GM10248 (cell line): ENCODE measurements at regions of chr2 and their contacts with region 1.

Region 1: DNA sequence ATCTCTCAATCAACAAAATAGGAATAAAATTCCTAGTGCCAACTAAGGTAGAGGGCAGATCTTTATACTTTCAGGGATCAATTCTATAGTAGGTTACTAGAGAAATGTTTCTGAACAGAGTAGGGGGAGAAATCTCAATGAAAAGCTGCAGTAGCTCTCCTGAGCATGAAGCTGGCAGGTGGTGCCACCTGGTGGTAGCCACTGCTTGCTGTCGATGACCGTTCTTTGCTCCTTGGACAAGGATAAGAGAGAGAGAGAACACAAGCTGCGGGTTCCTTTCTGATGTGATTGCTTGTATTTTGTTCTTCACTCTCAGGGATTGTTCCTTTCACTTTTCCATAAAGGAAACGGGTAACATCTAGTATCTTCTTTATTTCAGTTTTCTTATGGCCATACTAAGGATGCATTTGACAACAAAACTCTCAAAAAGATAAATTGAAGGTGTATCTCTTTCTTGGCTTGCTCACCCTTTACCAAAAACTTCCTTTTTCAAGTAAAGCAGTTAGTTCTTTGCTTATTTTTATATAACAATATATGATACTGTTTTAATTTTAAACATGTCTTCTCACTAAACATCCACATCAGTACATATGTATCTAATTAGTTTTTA is 18.6 kb upstream of the MRPL19 start:
- DNase-seq: peak; percentile 68
- CTCF ChIP-seq: peak; percentile 95

Region 2: GRCh38 chr2:74690571-74690970 is 937.4 kb before region 1 on chr2:
- CTCF ChIA-PET with region 1: interaction called, 10 read pairs
- POLR2A ChIA-PET with region 1: no interaction called
- DNase-seq: peak; percentile 68
- CTCF ChIP-seq: peak; percentile 75

Region 3: GRCh38 chr2:74919827-74920226 is 708.2 kb before region 1 on chr2:
- CTCF ChIA-PET with region 1: interaction called, 12 read pairs
- POLR2A ChIA-PET with region 1: no interaction called
- DNase-seq: peak; percentile 84
- CTCF ChIP-seq: peak; percentile 91

Region 4: GRCh38 chr2:75246441-75247167 is 381.4 kb before region 1 on chr2:
- CTCF ChIA-PET with region 1: no interaction called
- POLR2A ChIA-PET with region 1: no interaction called
- DNase-seq: no peak
- CTCF ChIP-seq: no peak

Region 5: GRCh38 chr2:75640621-75641121 is 12.7 kb after region 1 on chr2:
- CTCF ChIA-PET with region 1: interaction called, 24 read pairs
- POLR2A ChIA-PET with region 1: no interaction called
- DNase-seq: peak; percentile 51
- CTCF ChIP-seq: peak; percentile 97

Region 6: DNA sequence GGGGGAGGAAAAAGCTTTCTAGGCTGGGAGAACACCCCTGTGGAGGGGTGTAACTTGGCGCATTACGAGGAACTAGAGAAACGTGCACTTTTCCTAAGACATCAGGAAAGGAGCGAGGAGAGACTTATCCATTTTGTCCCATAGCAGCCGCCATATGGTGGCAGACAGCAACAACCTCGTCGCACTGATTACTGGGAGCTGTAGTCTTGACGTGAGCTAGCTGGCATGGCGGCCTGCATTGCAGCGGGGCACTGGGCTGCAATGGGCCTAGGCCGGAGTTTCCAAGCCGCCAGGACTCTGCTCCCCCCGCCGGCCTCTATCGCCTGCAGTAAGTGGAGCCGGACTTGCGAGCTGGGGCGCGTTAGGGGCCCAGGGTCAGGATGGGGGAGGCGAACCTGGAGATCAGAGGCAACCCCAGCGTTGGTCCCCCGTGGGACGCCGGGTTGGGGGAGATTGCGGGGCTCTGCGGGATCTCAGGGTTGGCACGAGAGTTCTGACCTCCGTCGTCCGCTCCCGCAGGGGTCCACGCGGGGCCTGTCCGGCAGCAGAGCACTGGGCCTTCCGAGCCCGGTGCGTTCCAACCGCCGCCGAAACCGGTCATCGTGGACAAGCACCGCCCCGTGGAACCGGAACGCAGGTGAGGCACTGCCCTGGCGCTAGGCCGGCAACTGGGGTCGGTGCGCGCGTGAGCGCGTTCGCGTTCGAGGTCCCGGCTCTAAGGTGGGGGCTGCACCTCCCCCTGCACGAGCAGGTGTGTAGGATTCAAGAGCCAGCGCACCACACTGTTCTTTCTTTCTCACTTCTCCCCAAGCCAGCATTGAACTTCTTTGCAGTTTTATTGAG is 18.8 kb after region 1 on chr2 and contains the start of gene MRPL19:
- CTCF ChIA-PET with region 1: interaction called, 24 read pairs
- POLR2A ChIA-PET with region 1: no interaction called
- DNase-seq: peak; percentile 92
- CTCF ChIP-seq: no peak